Activated CD4-positive, alpha-beta memory T cell treated with anti-CD3 and anti-CD28 coated beads for 36 hours (primary cell): ENCODE measurements at regions of chr5 and their contacts with region 1.

Region 1: DNA sequence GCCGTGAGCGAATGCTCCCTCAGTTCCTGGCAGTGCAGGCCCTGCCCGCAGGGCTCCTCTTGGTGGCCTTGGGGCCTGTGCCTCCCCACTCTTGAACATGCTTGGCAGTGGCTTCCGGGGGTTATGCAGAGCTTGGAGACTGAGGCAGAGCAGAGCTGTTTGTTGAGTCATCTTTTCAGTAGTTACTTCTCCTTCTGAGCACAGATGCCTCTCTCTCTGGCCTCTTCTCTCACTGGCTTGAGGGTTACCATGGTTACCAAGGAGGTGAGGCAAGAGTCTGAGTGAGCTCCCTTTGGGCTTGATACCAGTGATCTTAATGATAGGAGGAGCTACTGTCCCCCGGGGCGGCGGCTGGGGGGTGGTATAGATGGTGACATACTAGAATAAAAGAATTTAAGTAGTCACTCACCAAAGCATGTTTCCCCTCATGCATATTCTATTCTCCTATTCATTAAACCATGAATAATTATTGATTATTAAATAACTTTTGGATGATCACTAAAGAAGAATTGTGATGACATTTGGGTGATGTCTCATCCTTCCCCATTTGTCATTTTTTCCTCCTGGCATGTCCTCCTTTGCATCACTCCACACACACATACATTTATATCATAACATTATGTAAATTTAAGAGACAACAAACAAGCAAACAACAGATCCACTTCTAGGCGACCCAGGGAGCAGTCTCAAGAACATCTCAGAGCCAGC is 111.1 kb downstream of the ARHGAP26 start:
- DNase-seq: no peak
- H3K4me3 Mint-ChIP-seq: no peak overlapping the region
- H3K27ac Mint-ChIP-seq: no peak overlapping the region
- H3K4me1 Mint-ChIP-seq: no peaks in the 10 kb centered on the region
- H3K27me3 Mint-ChIP-seq: no peaks in the 10 kb centered on the region

Region 2: DNA sequence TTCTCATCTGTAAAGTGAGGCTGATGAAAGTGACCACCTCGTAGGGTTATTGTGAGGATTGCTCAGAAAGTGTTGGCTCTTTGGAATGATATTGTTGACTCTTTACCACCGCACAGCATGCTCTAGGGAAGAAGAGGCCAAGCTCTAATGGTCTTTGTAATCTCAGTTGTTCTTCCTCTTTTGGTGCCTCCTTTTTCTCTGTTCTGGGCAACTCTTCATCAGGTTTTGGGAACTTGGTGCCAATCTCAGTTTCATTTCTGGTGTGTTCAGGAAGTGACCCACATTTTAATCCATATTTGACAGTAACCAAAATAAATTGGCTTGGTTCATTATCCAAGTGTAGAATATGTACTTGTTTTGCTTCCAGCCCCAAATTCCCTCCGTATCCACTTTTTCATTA is 86.0 kb before region 1 on chr5:
- CTCF ChIA-PET with region 1: no interaction called
- POLR2A ChIA-PET with region 1: no interaction called
- intact Hi-C with region 1: no loop called
- DNase-seq: no peak
- H3K4me3 Mint-ChIP-seq: no peak overlapping the region
- H3K27ac Mint-ChIP-seq: no peak overlapping the region
- H3K4me1 Mint-ChIP-seq: peaks cover 47% of the 10 kb centered on the region
- H3K27me3 Mint-ChIP-seq: no peaks in the 10 kb centered on the region

Region 3: GRCh38 chr5:142862594-142862993 is 18.6 kb before region 1 on chr5:
- CTCF ChIA-PET with region 1: interaction called, 57 read pairs
- POLR2A ChIA-PET with region 1: no interaction called
- intact Hi-C with region 1: loop called (anchors 2 kb)
- DNase-seq: no peak
- H3K4me3 Mint-ChIP-seq: no peak overlapping the region
- H3K27ac Mint-ChIP-seq: no peak overlapping the region
- H3K4me1 Mint-ChIP-seq: peaks cover 25% of the 10 kb centered on the region
- H3K27me3 Mint-ChIP-seq: no peaks in the 10 kb centered on the region